K562 (cell line): ENCODE measurements at regions of chr10 and their contacts with region 1.

Region 1: DNA sequence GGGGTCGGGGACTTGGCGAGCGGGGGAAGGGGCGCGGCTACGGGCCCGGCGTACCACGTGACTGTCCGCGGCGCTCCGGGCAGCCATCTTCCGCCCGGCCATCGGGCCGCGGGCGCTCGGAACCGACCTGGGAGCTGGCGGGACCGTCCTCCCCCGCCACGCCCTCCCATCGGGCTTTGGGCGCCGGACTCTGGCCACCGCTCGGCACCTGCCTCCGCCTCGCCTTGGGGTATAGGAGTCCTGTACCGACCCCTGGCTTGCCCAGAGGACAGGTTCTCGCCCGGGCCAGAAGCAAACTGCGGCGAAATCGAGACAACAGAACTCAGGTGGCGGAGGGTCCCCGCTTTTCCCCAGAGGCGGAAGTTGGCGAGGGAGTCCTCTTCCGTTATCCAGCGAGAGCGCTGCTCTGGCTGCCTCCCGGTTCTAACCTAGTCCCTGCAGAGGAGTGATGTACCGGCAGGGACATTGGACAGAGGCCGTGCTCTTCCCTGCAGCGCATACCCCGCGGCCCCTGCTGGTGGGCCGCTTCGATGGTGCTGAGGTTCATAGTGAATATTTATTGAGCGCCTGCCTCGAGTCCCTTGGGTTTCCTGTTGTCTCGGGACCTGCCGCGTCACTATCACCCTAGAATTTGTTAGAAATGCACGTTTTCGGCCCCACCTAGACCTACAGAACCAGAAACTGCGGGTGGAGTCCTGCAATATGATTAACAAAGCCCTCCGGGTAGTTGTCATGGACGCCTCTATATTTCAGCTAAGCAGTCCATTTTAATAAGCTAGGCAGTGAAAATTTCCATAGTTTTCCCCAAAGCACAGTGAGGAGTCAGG is 1.3 kb upstream of the SGMS1 start:
- DNase-seq: peak; percentile 91 to 93 (median 92)
- ATAC-seq: peak; percentile 73
- H3K4me3 ChIP-seq: peak overlapping the region; percentile 77
- H3K27ac ChIP-seq: peak overlapping the region; percentile 82
- H3K4me1 ChIP-seq: peaks cover 10 to 34% of the 10 kb centered on the region in 2 experiments
- H3K27me3 ChIP-seq: no peaks in the 10 kb centered on the region
- CTCF ChIP-seq: peak; percentile 75 to 97 (median 80)
- EP300 ChIP-seq: peak; percentile 5; the same call in 1 of the 2 replicates
- POLR2A ChIP-seq: peak; percentile 84
- RAD21 ChIP-seq: peak; percentile 71

Region 2: GRCh38 chr10:49053053-49053997 is 1571.8 kb before region 1 on chr10:
- CTCF ChIA-PET with region 1: no interaction called
- POLR2A ChIA-PET with region 1: no interaction called
- in situ Hi-C with region 1: no loop called
- intact Hi-C with region 1: no loop called
- DNase-seq: no peak
- ATAC-seq: no peak
- H3K4me3 ChIP-seq: no peak overlapping the region
- H3K27ac ChIP-seq: no peak overlapping the region
- H3K4me1 ChIP-seq: no peaks in the 10 kb centered on the region
- H3K27me3 ChIP-seq: no peaks in the 10 kb centered on the region
- CTCF ChIP-seq: no peak
- EP300 ChIP-seq: no peak
- POLR2A ChIP-seq: no peak
- RAD21 ChIP-seq: no peak

Region 3: GRCh38 chr10:50291261-50291850 is 333.7 kb before region 1 on chr10:
- CTCF ChIA-PET with region 1: interaction called, 3 read pairs
- POLR2A ChIA-PET with region 1: no interaction called
- in situ Hi-C with region 1: no loop called
- intact Hi-C with region 1: loop called (anchors 2 kb)
- DNase-seq: peak; percentile 42 to 68 (median 60)
- ATAC-seq: peak; percentile 88
- H3K4me3 ChIP-seq: no peak overlapping the region
- H3K27ac ChIP-seq: no peak overlapping the region
- H3K4me1 ChIP-seq: peaks cover 9 to 16% of the 10 kb centered on the region in 2 experiments; a peak in 3 of 5 replicates
- H3K27me3 ChIP-seq: no peaks in the 10 kb centered on the region
- CTCF ChIP-seq: peak; percentile 74 to 89 (median 76)
- EP300 ChIP-seq: no peak
- POLR2A ChIP-seq: no peak
- RAD21 ChIP-seq: peak; percentile 91 to 97

Region 4: DNA sequence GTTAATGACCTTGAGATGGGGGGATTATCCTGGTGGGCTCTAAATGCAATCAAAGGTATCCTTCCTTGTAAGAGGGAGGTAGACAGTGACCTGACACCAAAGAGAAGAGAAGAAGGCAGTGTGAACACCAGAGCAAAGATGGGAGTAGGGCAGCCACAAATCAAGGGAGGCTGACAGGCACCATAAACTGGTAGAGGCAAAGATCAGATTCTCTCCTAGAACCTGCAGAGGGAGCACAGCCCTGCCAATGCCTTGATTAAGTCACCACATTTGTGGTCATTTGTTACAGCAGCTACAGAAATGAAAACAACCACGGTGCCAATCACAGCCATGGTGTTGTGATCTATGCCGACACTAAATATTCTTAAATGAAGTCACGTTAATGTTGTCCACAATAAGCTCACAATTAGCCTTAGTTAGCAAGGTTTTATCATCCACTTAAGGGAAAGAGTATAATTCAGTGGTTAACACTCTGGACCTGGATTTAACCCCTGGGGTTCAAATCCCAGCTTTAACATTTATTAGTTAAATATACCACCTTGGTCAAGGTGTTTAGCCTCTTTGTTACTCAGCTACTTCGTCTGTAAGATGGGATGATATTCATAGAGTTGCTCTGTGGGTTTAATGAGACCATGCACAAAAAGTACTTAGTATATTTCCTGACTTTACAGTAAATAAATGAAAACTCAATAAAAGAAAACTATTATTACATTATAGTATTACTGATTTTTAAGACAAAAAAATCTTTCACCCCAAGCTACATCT is 72.1 kb before region 1 on chr10:
- CTCF ChIA-PET with region 1: no interaction called
- POLR2A ChIA-PET with region 1: interaction called, 7 read pairs
- in situ Hi-C with region 1: no loop called
- intact Hi-C with region 1: loop called (anchors 1 kb)
- DNase-seq: peak in 2 of 4 experiments; percentile 41 to 77
- ATAC-seq: peak; percentile 43
- H3K4me3 ChIP-seq: no peak overlapping the region; the same call in 1 of the 2 replicates
- H3K27ac ChIP-seq: peak overlapping the region; percentile 23; the same call in 1 of the 3 replicates
- H3K4me1 ChIP-seq: peaks cover 34 to 63% of the 10 kb centered on the region in 2 experiments
- H3K27me3 ChIP-seq: no peaks in the 10 kb centered on the region
- CTCF ChIP-seq: peak; percentile 57 to 66 (median 60)
- EP300 ChIP-seq: peak; percentile 39; the same call in 1 of the 2 replicates
- POLR2A ChIP-seq: no peak
- RAD21 ChIP-seq: peak; percentile 57 to 68; a peak in 3 of 4 replicates

Region 5: DNA sequence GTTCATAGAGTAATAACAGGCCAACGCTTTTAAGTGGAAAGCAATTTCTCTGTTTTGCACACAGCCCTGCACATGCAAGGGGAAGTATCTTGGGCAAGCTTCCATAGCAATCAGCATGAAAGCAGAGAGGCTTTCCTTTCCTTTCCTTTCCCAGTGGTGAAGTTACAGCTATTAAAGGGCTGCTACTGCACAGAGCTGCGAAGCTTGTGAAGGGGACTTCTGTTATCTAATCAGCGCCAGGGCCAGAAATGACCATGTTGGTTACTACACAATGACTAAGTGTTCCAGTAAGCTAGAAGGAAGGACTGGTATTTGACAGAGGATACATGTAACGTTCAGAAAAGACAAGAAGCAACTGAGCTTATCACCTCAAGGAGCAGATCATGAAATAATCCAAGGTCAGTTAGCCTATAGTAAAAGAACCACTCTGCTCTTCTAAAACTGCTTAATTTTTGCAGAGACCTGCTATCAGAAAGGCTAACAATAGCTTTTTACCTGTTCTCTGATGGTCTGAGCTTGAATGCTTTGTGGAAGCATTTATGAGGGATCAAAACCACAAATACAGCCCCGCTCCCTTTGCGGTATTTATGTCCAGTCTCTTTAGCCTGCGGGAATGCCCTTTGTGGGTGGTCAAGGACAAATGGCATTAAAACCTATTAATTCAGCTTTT is 47.3 kb before region 1 on chr10:
- CTCF ChIA-PET with region 1: no interaction called
- POLR2A ChIA-PET with region 1: interaction called, 13 read pairs
- in situ Hi-C with region 1: no loop called
- intact Hi-C with region 1: loop called (anchors 1 kb)
- DNase-seq: peak; percentile 65 to 96 (median 78)
- ATAC-seq: peak; percentile 92
- H3K4me3 ChIP-seq: peak overlapping the region; percentile 24; the same call in 1 of the 2 replicates
- H3K27ac ChIP-seq: peak overlapping the region; percentile 97
- H3K4me1 ChIP-seq: peaks cover 47 to 91% of the 10 kb centered on the region in 2 experiments
- H3K27me3 ChIP-seq: no peaks in the 10 kb centered on the region
- CTCF ChIP-seq: no peak
- EP300 ChIP-seq: peak; percentile 99
- POLR2A ChIP-seq: peak; percentile 65
- RAD21 ChIP-seq: peak in 1 of 2 experiments; percentile 50

Region 6: DNA sequence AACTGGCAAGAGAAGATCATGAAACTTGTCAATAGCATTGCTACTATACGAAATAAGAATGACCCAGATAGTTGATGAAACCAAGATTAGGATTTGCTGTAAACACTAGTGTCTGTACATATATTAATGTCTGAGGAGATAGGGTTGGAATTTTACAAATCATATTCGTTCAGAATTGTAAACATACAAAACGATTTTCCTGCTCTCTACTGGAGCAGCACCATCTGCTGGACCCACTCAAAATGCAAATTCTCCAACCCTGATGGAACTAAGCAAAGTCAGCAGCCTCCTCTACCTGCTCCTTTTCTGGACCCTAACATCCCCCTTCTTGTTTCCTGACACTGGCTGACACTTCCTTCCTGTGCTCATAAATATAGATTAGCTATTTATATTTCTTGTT is 28.1 kb after region 1 on chr10:
- CTCF ChIA-PET with region 1: no interaction called
- POLR2A ChIA-PET with region 1: no interaction called
- in situ Hi-C with region 1: no loop called
- intact Hi-C with region 1: loop called (anchors 2 kb)
- DNase-seq: peak in 3 of 4 experiments; percentile 24 to 62 (median 47)
- ATAC-seq: peak; percentile 75
- H3K4me3 ChIP-seq: no peak overlapping the region
- H3K27ac ChIP-seq: no peak overlapping the region
- H3K4me1 ChIP-seq: peaks cover 11 to 19% of the 10 kb centered on the region in 2 experiments; a peak in 4 of 5 replicates
- H3K27me3 ChIP-seq: no peaks in the 10 kb centered on the region
- CTCF ChIP-seq: peak; percentile 65 to 75 (median 65)
- EP300 ChIP-seq: no peak
- POLR2A ChIP-seq: no peak
- RAD21 ChIP-seq: peak; percentile 53 to 75